ENCODE measurements at regions of chr7 and their contacts with region 1.

Region 1: DNA sequence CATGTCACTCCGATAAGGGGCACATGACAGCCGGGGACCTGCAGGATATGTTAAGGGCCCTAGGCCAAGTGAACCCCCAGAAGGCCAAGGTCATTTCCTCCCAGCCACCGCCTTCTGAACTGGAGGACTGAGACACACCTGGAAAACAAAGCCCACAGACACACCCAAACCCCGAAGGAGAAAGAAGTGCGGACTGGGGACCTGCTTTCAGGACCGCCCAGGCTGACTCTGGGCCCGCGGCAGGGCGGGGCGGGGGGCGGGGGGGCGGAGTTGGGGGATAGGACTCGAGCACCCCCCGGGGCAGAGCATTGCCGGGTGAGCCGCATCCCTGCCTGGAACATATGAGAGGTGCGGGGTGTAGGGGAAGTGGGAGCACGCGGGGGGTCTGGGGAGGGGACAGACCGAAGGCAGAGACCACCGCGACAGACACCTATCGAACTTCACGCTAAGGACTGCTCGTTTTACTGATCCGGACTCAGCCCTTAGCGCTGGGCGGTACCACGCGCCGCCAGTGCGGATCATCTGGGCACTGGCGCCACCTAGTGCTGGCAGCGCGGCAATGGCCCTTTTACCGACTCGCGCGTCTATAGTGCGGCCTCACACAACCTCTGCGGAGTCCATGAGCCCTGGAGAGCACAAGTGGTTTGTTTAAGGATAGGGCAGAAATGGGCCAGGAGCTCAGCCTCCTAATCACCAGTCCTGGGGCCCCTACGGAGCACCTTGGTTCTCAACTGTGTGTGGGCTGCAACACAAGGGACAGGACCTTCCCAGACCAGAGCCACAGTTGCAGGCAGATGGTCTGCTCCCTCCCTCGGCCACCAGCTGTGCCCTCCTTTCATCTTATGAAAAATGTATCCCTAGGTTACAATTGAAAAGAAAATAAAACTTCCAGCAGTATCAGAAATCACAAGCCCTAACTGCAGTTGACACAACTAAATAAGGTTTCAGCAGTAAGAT is 157.6 kb downstream of the HERPUD2 start:
- DNase-seq: peak; percentile 46
- ATAC-seq: peak; percentile 96
- H3K4me3 ChIP-seq: peak overlapping the region in 2 of 3 experiments; percentile 35 to 51; a peak in 4 of 6 replicates
- H3K27ac ChIP-seq: no peak overlapping the region
- H3K4me1 ChIP-seq: peaks cover 13% of the 10 kb centered on the region
- H3K27me3 ChIP-seq: peaks cover 0 to 22% of the 10 kb centered on the region in 2 experiments; a peak in 2 of 5 replicates
- CTCF ChIP-seq: peak; percentile 98
- EP300 ChIP-seq: no peak
- POLR2A ChIP-seq: no peak
- RAD21 ChIP-seq: peak; percentile 91

Region 2: GRCh38 chr7:35185907-35186731 is 351.2 kb before region 1 on chr7:
- CTCF ChIA-PET with region 1: no interaction called
- POLR2A ChIA-PET with region 1: no interaction called
- in situ Hi-C with region 1: loop called (anchors 25 kb)
- intact Hi-C with region 1: no loop called
- DNase-seq: no peak
- ATAC-seq: no peak
- H3K4me3 ChIP-seq: no peak overlapping the region
- H3K27ac ChIP-seq: no peak overlapping the region
- H3K4me1 ChIP-seq: no peaks in the 10 kb centered on the region
- H3K27me3 ChIP-seq: peaks cover 0 to 9% of the 10 kb centered on the region in 2 experiments; a peak in 1 of 5 replicates
- CTCF ChIP-seq: no peak
- EP300 ChIP-seq: no peak
- POLR2A ChIP-seq: no peak
- RAD21 ChIP-seq: no peak

Region 3: GRCh38 chr7:35555934-35556333 is 18.6 kb after region 1 on chr7:
- CTCF ChIA-PET with region 1: no interaction called
- POLR2A ChIA-PET with region 1: no interaction called
- in situ Hi-C with region 1: no loop called
- intact Hi-C with region 1: no loop called
- DNase-seq: peak; percentile 43
- ATAC-seq: peak; percentile 59
- H3K4me3 ChIP-seq: no peak overlapping the region
- H3K27ac ChIP-seq: no peak overlapping the region
- H3K4me1 ChIP-seq: peaks cover 23% of the 10 kb centered on the region
- H3K27me3 ChIP-seq: no peaks in the 10 kb centered on the region
- CTCF ChIP-seq: no peak
- EP300 ChIP-seq: no peak
- POLR2A ChIP-seq: no peak
- RAD21 ChIP-seq: no peak

Region 4: DNA sequence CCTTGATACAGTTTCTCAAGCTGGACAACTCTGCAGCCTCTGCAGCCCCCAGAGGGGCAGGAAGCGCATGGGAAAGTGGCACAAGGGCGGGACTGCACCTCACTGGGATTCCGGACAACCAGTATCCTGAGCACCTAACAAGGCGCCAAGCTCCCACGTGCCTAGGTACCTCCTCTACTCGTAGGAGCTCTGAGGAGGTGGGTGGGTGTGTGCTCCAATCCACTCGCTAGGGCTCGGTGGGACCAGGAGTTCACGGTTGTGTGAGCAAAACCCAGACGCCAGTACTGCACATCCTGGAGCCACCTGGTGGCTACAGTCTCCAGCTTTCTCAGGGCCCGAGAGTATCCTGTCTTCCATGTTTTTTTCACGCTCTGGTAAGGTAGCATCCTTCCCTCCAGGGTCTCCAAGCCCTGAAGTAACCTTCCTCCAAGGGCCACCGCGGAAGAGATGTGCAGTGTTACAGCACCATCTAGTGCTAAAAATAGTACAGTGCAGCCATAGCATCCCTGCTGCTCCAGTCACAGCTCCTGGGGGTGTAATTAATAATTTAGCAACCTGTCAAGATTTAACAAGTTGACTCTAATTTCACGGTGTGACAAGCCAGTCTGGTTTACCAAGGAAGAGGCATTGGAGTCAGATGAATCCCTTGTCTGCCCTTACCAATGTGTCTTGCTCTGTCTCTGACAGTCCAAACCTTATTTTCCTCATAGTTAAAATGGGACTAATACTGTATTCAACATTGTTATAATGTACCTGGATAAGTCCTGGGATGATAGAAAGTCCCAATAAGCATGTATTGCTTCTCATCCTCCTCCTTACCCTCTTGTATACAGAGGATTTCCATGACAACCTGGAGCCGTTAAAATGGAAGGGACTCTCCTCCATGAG is 87.2 kb after region 1 on chr7:
- CTCF ChIA-PET with region 1: no interaction called
- POLR2A ChIA-PET with region 1: no interaction called
- in situ Hi-C with region 1: no loop called
- intact Hi-C with region 1: loop called (anchors 10 kb)
- DNase-seq: peak; percentile 31
- ATAC-seq: peak; percentile 93
- H3K4me3 ChIP-seq: peak overlapping the region in 1 of 3 experiments; percentile 17; a peak in 1 of 6 replicates
- H3K27ac ChIP-seq: no peak overlapping the region
- H3K4me1 ChIP-seq: peaks cover 7% of the 10 kb centered on the region
- H3K27me3 ChIP-seq: no peaks in the 10 kb centered on the region
- CTCF ChIP-seq: peak; percentile 87
- EP300 ChIP-seq: no peak
- POLR2A ChIP-seq: no peak
- RAD21 ChIP-seq: peak; percentile 77